Panc1 (cell line): ENCODE measurements at regions of chr3 and their contacts with region 1.

Region 1: GRCh38 chr3:12046406-12046805 is 42.2 kb downstream of the SYN2 start:
- DNase-seq: no peak
- ATAC-seq: no peak
- H3K4me3 ChIP-seq: no peak overlapping the region
- H3K27ac ChIP-seq: no peak overlapping the region
- H3K4me1 ChIP-seq: no peaks in the 10 kb centered on the region
- H3K27me3 ChIP-seq: 0 out of 2 replicates have a peak, but pooled peaks cover 2% of the 10 kb centered on the region
- CTCF ChIP-seq: peak; percentile 57; the same call in 1 of the 2 replicates

Region 2: DNA sequence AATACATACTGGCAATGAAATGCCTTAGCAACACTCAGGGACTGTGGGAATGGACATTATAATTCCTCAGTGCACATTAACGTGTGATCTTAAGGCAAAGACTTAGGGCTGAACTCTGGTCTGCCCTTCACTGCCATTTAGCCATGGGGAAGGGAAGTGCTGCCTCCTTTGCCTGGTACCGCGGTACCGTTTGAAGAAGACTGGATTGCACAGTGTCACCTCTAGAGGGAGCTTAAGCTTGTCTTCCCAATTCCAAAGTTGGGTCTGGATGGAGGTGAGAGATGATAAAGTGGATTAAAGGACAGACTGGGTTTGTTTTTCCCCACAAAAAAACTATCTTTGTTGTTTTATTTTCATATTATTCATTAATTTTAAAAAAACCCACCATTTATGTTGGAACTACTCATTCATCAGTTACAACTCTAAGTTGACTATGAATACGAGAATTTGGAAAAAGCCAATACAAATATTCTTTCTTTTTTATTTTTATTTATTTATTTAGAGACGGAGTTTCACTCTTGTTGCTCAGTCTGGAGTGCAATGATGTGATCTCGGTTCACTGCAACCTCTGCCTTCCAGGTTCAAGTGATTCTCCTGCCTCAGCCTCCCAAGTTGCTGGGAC is 102.2 kb before region 1 on chr3:
- CTCF ChIA-PET with region 1: no interaction called
- POLR2A ChIA-PET with region 1: no interaction called
- in situ Hi-C with region 1: no loop called
- intact Hi-C with region 1: loop called (anchors 5 kb)
- DNase-seq: peak; percentile 4
- ATAC-seq: peak; percentile 97
- H3K4me3 ChIP-seq: no peak overlapping the region
- H3K27ac ChIP-seq: no peak overlapping the region
- H3K4me1 ChIP-seq: no peaks in the 10 kb centered on the region
- H3K27me3 ChIP-seq: no peaks in the 10 kb centered on the region; the same call in 1 of the 2 replicates
- CTCF ChIP-seq: peak; percentile 83

Region 3: GRCh38 chr3:12017516-12017915 is 28.9 kb before region 1 on chr3:
- CTCF ChIA-PET with region 1: no interaction called
- POLR2A ChIA-PET with region 1: no interaction called
- in situ Hi-C with region 1: no loop called
- intact Hi-C with region 1: no loop called
- DNase-seq: no peak
- ATAC-seq: no peak
- H3K4me3 ChIP-seq: no peak overlapping the region
- H3K27ac ChIP-seq: no peak overlapping the region
- H3K4me1 ChIP-seq: no peaks in the 10 kb centered on the region
- H3K27me3 ChIP-seq: peaks cover 25% of the 10 kb centered on the region
- CTCF ChIP-seq: no peak